CD14-positive monocyte (primary cell): ENCODE measurements at regions of chr7 and their contacts with region 1.

Region 1: GRCh38 chr7:1065263-1066260 is 21.2 kb downstream of the GPR146 start:
- DNase-seq: peak; percentile 69 to 77 (median 74)
- H3K4me3 ChIP-seq: no peak overlapping the region
- H3K4me3 Mint-ChIP-seq: peak overlapping the region in 1 of 2 donors; percentile 82
- H3K27ac ChIP-seq: no peak overlapping the region
- H3K27ac Mint-ChIP-seq: no peak overlapping the region
- H3K4me1 ChIP-seq: peaks cover 28 to 33% of the 10 kb centered on the region in 2 donors
- H3K4me1 Mint-ChIP-seq: peaks cover 31% of the 10 kb centered on the region
- H3K27me3 ChIP-seq: peaks cover 0 to 32% of the 10 kb centered on the region in 2 donors
- H3K27me3 Mint-ChIP-seq: peaks cover 26 to 37% (median 28%) of the 10 kb centered on the region in 3 donors
- CTCF ChIP-seq: peak; percentile 95

Region 2: GRCh38 chr7:786472-787255 is 278.9 kb before region 1 on chr7:
- intact Hi-C with region 1: loop called in 1 of 2 experiments (anchors 10 kb)
- DNase-seq: peak; percentile 40 to 56 (median 55)
- H3K4me3 ChIP-seq: no peak overlapping the region
- H3K4me3 Mint-ChIP-seq: no peak overlapping the region
- H3K27ac ChIP-seq: no peak overlapping the region
- H3K27ac Mint-ChIP-seq: peak overlapping the region in 1 of 7 donors; percentile 70
- H3K4me1 ChIP-seq: no peaks in the 10 kb centered on the region
- H3K4me1 Mint-ChIP-seq: no peaks in the 10 kb centered on the region
- H3K27me3 ChIP-seq: no peaks in the 10 kb centered on the region
- H3K27me3 Mint-ChIP-seq: peaks cover 0 to 6% (median 2%) of the 10 kb centered on the region in 3 donors
- CTCF ChIP-seq: peak; percentile 74

Region 3: GRCh38 chr7:901381-902154 is 164.0 kb before region 1 on chr7:
- intact Hi-C with region 1: loop called (anchors 10 kb)
- DNase-seq: peak; percentile 82 to 85 (median 84)
- H3K4me3 ChIP-seq: no peak overlapping the region
- H3K4me3 Mint-ChIP-seq: no peak overlapping the region
- H3K27ac ChIP-seq: peak overlapping the region; percentile 24 to 26
- H3K27ac Mint-ChIP-seq: peak overlapping the region; percentile 26 to 85 (median 63)
- H3K4me1 ChIP-seq: peaks cover 9 to 12% of the 10 kb centered on the region in 2 donors
- H3K4me1 Mint-ChIP-seq: peaks cover 16% of the 10 kb centered on the region
- H3K27me3 ChIP-seq: no peaks in the 10 kb centered on the region
- H3K27me3 Mint-ChIP-seq: no peaks in the 10 kb centered on the region
- CTCF ChIP-seq: no peak

Region 4: DNA sequence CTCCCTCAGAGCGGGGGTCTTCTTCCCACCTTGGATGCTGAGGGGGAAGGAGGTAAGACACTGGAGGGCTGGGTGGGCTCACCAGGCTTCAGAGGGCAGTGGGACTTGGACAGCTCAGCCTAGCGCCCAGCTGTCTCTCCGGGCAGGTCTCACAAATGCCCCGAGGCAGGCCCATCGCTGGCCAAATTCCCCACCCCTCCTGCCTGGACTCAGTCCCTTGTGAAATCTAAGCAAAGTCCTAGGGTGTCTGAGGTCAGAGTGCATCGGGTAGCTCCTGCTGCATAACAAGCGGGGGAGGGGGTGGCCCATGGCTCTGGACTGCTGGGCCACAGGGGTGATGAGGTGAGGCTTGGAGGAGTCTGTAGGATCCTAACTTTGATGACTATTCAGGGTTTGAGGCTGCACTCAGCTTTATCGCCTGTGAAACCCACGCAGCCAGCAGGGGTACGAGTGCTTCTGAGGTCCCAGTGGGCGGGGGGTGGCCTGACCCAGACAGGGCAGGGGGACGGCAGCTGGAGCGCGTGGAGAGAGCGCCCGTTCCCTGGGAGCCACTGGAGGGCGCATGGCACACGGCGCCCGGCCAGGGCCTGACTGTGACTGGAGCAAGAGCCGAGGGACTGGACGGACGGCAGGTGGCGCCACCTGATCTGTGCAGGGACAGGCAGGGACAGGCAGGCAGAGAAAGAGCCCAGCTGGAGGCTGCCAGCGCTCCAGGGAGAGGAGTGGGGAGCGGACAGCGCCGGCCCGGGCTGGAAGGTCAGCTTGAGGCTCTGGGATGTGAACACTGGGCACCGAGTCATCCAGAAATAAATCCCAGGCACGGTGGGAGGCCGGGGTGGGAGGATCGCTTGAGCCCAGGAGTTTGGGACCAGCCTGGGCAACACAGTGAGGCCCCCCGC is 72.6 kb before region 1 on chr7:
- intact Hi-C with region 1: loop called (anchors 1 kb)
- DNase-seq: peak; percentile 91 to 95 (median 92)
- H3K4me3 ChIP-seq: no peak overlapping the region
- H3K4me3 Mint-ChIP-seq: no peak overlapping the region
- H3K27ac ChIP-seq: no peak overlapping the region
- H3K27ac Mint-ChIP-seq: no peak overlapping the region
- H3K4me1 ChIP-seq: peaks cover 5 to 10% of the 10 kb centered on the region in 2 donors
- H3K4me1 Mint-ChIP-seq: peaks cover 7% of the 10 kb centered on the region
- H3K27me3 ChIP-seq: peaks cover 0 to 8% of the 10 kb centered on the region in 2 donors
- H3K27me3 Mint-ChIP-seq: peaks cover 7 to 30% (median 10%) of the 10 kb centered on the region in 3 donors
- CTCF ChIP-seq: peak; percentile 99